ENCODE measurements at regions of chr15 and their contacts with region 1.

Region 1: GRCh38 chr15:88348579-88349230 is 92.2 kb upstream of the NTRK3 start:
- DNase-seq: no peak
- H3K4me3 ChIP-seq: no peak overlapping the region
- H3K27ac ChIP-seq: no peak overlapping the region
- H3K4me1 ChIP-seq: no peaks in the 10 kb centered on the region
- H3K27me3 ChIP-seq: no peaks in the 10 kb centered on the region
- CTCF ChIP-seq: no peak
- EP300 ChIP-seq: no peak
- POLR2A ChIP-seq: no peak
- RAD21 ChIP-seq: no peak

Region 2: GRCh38 chr15:88337993-88338392 is 10.7 kb before region 1 on chr15:
- CTCF ChIA-PET with region 1: interaction called, 11 read pairs
- POLR2A ChIA-PET with region 1: no interaction called
- DNase-seq: no peak
- H3K4me3 ChIP-seq: no peak overlapping the region
- H3K27ac ChIP-seq: no peak overlapping the region
- H3K4me1 ChIP-seq: no peaks in the 10 kb centered on the region; a peak in 1 of 7 replicates
- H3K27me3 ChIP-seq: no peaks in the 10 kb centered on the region; a peak in 1 of 7 replicates
- CTCF ChIP-seq: peak in 2 of 3 experiments; percentile 28 to 46; a peak in 2 of 4 replicates
- EP300 ChIP-seq: no peak
- POLR2A ChIP-seq: no peak
- RAD21 ChIP-seq: peak; percentile 2 to 34; a peak in 1 of 4 replicates

Measured in H1 (cell line).